ENCODE measurements at regions of chr7 and their contacts with region 1.

Region 1: GRCh38 chr7:92043637-92044036 is 90.6 kb downstream of the CYP51A1 start:
- DNase-seq: no peak
- H3K4me3 ChIP-seq: no peak overlapping the region
- H3K27ac ChIP-seq: no peak overlapping the region
- H3K4me1 ChIP-seq: no peaks in the 10 kb centered on the region
- H3K27me3 ChIP-seq: no peaks in the 10 kb centered on the region
- CTCF ChIP-seq: no peak

Region 2: GRCh38 chr7:91940572-91941341 is 102.9 kb before region 1 on chr7 and contains the start of gene AKAP9:
- CTCF ChIA-PET with region 1: no interaction called
- dilution Hi-C with region 1: no loop called
- in situ Hi-C with region 1: no loop called
- intact Hi-C with region 1: loop called (anchors 5 kb)
- DNase-seq: peak; percentile 86
- H3K4me3 ChIP-seq: peak within 1 kb of the TSS; percentile 80 to 95 (median 91)
- H3K27ac ChIP-seq: peak within 1 kb of the TSS; percentile 81
- H3K4me1 ChIP-seq: peaks cover 6% of the 10 kb centered on the region
- H3K27me3 ChIP-seq: no peaks in the 10 kb centered on the region
- CTCF ChIP-seq: no peak
- total RNA-seq, gene AKAP9: 34.8 to 42.1 TPM

Measured in mammary epithelial cell (primary cell).